ENCODE measurements at regions of chr7 and their contacts with region 1.

Region 1: GRCh38 chr7:120272261-120272660 is 714 bp upstream of the KCND2 start:
- DNase-seq: no peak
- ATAC-seq: peak in 3 of 8 donors; percentile 20 to 42 (median 35)
- H3K4me3 ChIP-seq: peak overlapping the region in 9 of 10 donors; percentile 23 to 53 (median 49)
- H3K27ac ChIP-seq: no peak overlapping the region
- H3K4me1 ChIP-seq: peaks cover 0 to 9% (median 6%) of the 10 kb centered on the region in 9 donors
- H3K27me3 ChIP-seq: peaks cover 0 to 44% (median 21%) of the 10 kb centered on the region in 7 donors
- CTCF ChIP-seq: peak in 8 of 9 donors; percentile 26 to 70 (median 62)

Region 2: DNA sequence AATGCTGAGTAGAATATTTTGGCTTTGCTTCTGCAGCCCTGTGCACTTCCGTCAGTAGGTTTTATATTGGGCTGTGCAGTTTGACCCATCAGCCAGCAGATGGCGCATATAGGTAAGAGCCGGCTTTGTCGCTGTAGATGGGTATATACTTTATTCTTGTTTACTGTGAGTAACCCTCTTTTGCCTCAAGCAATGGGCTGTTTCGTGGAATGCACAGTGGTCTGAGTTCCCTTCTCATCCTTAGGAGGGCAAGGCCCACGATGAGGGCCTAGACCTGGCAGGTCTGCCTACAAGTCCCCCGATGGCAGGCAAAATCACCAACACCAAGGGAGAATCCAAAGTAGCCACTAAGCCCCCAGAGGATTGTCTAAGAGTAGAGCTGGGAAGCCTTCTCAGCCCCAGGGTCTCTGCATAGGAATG is 1002.2 kb before region 1 on chr7:
- intact Hi-C with region 1: loop called in 1 of 10 experiments (anchors 10 kb)
- DNase-seq: no peak
- ATAC-seq: peak in 1 of 8 donors; percentile 60
- H3K4me3 ChIP-seq: no peak overlapping the region
- H3K27ac ChIP-seq: no peak overlapping the region
- H3K4me1 ChIP-seq: no peaks in the 10 kb centered on the region
- H3K27me3 ChIP-seq: no peaks in the 10 kb centered on the region
- CTCF ChIP-seq: peak in 8 of 9 donors; percentile 34 to 79 (median 58)

Region 3: GRCh38 chr7:119935418-119936025 is 336.7 kb before region 1 on chr7:
- intact Hi-C with region 1: loop called (anchors 2 to 5 kb)
- DNase-seq: no peak
- ATAC-seq: no peak
- H3K4me3 ChIP-seq: no peak overlapping the region
- H3K27ac ChIP-seq: no peak overlapping the region
- H3K4me1 ChIP-seq: no peaks in the 10 kb centered on the region
- H3K27me3 ChIP-seq: peaks cover 0 to 4% (median 0%) of the 10 kb centered on the region in 7 donors
- CTCF ChIP-seq: peak; percentile 18 to 65 (median 48)

Measured in heart right ventricle (tissue), 16 donors.